ENCODE measurements at regions of chr1 and their contacts with region 1.

Region 1: DNA sequence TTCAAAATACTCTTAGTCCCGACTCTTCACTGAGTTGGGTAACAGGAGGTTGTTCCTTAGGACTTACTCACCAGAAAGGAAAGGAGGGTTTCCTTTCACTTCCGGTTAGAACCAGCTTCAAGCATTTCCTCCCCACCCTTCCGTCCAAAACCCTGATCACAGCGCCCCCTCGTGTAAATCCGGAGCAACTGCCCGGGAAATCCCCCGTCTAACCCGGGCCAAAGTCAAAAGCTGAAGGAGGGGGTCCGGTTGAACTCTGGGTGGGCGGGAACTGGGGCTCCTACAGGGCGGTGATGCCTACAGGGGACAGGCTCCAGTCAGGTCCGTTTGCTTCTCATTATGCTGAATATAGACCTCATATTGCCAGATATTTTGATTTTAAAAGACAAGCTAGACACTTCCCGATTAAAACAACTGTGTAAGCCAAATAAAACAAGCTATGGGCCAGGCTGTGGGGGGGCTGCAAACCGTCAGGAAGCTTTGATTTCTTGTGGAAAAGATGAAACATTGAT is 15.0 kb upstream of the MTARC2 start:
- DNase-seq: peak; percentile 51
- H3K4me3 ChIP-seq: no peak overlapping the region
- H3K27me3 ChIP-seq: no peaks in the 10 kb centered on the region; the same call in 1 of the 2 replicates
- CTCF ChIP-seq: peak; percentile 90

Region 2: DNA sequence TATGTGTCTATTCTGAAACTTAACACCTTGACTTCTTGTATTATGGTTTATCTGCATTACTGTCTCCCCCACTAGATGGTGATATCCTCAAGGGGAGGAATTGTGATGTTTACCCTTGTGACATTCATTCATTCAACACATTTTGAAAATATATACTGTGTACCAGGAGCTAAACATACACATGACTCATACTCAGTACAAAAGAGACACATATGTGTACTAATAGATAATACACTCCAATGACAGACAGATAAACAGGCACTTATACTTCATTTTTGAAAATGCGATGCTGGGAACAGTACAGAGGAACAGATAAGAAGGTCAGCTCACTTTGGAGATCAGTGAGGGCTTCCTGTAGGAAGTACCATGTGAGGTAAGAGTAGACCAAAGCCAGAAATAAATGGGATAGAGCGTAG is 452.0 kb before region 1 on chr1:
- CTCF ChIA-PET with region 1: interaction called, 22 read pairs
- POLR2A ChIA-PET with region 1: no interaction called
- DNase-seq: no peak
- H3K4me3 ChIP-seq: no peak overlapping the region
- H3K27me3 ChIP-seq: peaks cover 9% of the 10 kb centered on the region
- CTCF ChIP-seq: peak; percentile 68

Region 3: DNA sequence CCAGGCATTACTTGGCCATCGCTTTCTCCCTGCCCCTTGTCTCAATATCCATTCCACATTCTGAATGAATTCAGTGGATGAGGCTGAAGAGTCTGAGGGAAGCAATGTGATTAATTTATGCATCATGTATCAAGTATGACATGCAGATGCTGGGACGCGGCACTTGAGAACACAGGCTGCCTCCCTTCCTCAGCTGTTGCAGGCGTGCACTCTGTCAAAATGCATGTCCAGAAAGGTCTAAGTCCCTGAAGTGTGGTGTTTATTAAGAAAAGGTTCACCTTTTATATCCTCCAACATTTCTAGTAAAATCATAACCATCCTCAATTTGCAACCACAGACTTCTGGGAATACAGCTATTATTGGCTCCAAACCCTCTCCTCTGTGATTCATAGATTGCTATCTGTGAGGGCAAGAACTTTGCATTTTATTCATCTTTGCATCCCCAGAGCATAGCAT is 438.3 kb before region 1 on chr1:
- CTCF ChIA-PET with region 1: interaction called, 10 read pairs
- POLR2A ChIA-PET with region 1: no interaction called
- DNase-seq: peak; percentile 47
- H3K4me3 ChIP-seq: no peak overlapping the region
- H3K27me3 ChIP-seq: no peaks in the 10 kb centered on the region
- CTCF ChIP-seq: no peak

Region 4: GRCh38 chr1:220680085-220680687 is 53.0 kb before region 1 on chr1:
- CTCF ChIA-PET with region 1: interaction called, 15 read pairs
- POLR2A ChIA-PET with region 1: interaction called, 11 read pairs
- DNase-seq: no peak
- H3K4me3 ChIP-seq: no peak overlapping the region
- H3K27me3 ChIP-seq: no peaks in the 10 kb centered on the region
- CTCF ChIP-seq: peak; percentile 81

Region 5: GRCh38 chr1:220690140-220691025 is 42.8 kb before region 1 on chr1 and contains the start of gene C1orf115:
- CTCF ChIA-PET with region 1: interaction called, 11 read pairs
- POLR2A ChIA-PET with region 1: no interaction called
- DNase-seq: no peak
- H3K4me3 ChIP-seq: peak within 1 kb of the TSS; percentile 67
- H3K27me3 ChIP-seq: peaks cover 5% of the 10 kb centered on the region; the same call in 1 of the 2 replicates
- CTCF ChIP-seq: peak; percentile 78
- polyA plus RNA-seq, gene C1orf115: 3.8 and 3.9 TPM in 2 replicates

Region 6: DNA sequence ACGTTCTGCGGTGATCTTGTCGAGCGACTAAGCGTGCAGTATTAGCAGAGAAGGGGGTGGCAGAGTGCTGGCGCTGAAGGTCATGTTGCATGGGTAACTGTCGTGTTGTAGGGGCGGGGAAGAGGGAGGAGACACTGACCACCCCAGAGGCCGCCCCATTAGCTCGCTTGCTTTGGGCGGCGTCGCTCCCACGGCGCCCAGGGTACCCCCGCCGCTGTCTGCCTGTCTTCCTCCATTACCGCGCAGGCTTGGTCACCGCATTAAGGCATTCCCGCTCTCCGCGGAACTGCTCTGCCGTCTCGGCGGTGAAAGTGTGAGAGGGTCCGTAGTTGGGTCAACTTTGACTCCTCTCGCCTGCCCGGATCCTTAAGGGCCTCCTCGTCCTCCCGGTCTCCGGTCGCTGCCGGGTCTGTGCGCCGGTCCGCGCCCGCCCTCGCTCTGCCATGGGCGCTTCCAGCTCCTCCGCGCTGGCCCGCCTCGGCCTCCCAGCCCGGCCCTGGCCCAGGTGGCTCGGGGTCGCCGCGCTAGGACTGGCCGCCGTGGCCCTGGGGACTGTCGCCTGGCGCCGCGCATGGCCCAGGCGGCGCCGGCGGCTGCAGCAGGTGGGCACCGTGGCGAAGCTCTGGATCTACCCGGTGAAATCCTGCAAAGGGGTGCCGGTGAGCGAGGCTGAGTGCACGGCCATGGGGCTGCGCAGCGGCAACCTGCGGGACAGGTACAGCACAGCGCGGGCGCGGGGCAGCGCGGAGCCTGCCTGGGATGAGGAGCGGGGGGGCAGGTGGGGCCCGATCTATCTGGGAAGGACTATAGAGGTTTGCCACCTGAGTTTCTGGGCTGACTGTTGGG is 15.2 kb after region 1 on chr1 and contains the start of gene MTARC2:
- CTCF ChIA-PET with region 1: interaction called, 23 read pairs
- POLR2A ChIA-PET with region 1: no interaction called
- DNase-seq: peak; percentile 51
- H3K4me3 ChIP-seq: peak within 1 kb of the TSS; percentile 66
- H3K27me3 ChIP-seq: no peaks in the 10 kb centered on the region
- CTCF ChIP-seq: no peak
- polyA plus RNA-seq, gene MTARC2: 5.7 and 6.1 TPM in 2 replicates

Measured in BJ (cell line).